T-cell (primary cell): ENCODE measurements at regions of chr9 and their contacts with region 1.

Region 1: DNA sequence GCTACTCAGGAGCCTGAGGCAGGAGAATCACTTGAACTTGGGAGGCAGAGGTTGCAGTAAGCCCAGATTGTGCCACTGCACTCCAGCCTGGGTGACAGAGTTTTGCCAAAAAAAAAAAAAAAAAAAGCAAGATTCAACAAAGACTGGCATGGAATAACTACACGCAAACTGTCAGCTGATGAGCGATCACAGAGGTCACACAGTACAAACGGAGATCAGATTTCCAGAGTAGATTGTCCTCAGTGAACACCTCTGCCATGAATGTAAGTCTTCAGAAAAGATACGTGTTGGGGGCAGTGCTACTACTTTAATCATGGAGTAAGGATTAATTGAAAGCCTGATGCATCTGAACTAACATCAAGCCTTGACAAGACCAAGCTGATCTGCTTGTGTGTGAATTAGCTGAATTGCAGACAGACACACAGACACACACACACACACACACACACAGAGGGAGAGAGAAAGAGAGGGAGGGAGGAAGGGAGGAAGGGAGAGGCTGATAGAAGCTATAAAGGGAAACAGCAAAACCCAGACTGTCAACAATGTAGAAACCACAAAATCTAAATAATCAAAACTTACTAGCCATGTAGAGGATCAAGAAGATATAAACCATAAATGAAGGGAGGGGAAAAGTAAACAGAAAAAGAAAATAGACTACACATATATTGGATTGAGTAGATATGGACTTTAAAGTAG is 222.9 kb upstream of the ZNF462 start:
- DNase-seq: no peak
- ATAC-seq: no peak
- H3K4me3 ChIP-seq: no peak overlapping the region
- H3K4me3 Mint-ChIP-seq: no peak overlapping the region
- H3K27ac ChIP-seq: no peak overlapping the region
- H3K27ac Mint-ChIP-seq: no peak overlapping the region
- H3K4me1 ChIP-seq: no peaks in the 10 kb centered on the region
- H3K4me1 Mint-ChIP-seq: no peaks in the 10 kb centered on the region
- H3K27me3 ChIP-seq: no peaks in the 10 kb centered on the region
- H3K27me3 Mint-ChIP-seq: no peaks in the 10 kb centered on the region

Region 2: DNA sequence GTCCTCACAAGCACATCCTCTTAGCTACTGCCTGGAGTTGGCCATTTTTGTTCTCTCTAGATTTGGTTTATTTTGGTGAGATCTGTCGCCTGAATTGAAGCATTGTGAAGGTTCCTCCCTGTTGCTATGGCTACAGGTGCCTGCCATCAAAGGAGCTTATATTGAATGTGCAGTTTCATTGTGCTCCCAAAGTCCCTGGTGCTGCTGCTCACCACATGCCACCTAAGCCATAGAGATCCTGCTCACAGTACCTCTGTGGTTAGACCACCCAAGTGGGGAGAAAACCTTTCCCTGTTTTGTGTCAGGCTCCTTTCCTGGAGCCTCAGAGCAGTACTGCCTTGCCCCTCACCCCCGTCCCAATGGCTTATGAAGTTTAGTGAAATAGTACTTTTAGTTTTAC is 562.3 kb before region 1 on chr9:
- CTCF ChIA-PET with region 1: no interaction called
- POLR2A ChIA-PET with region 1: interaction called in 1 of 2 experiments, 10 read pairs
- DNase-seq: no peak
- ATAC-seq: no peak
- H3K4me3 ChIP-seq: no peak overlapping the region
- H3K4me3 Mint-ChIP-seq: no peak overlapping the region
- H3K27ac ChIP-seq: no peak overlapping the region
- H3K27ac Mint-ChIP-seq: no peak overlapping the region
- H3K4me1 ChIP-seq: no peaks in the 10 kb centered on the region
- H3K4me1 Mint-ChIP-seq: no peaks in the 10 kb centered on the region
- H3K27me3 ChIP-seq: no peaks in the 10 kb centered on the region
- H3K27me3 Mint-ChIP-seq: peaks cover 0 to 7% of the 10 kb centered on the region in 2 donors

Region 3: DNA sequence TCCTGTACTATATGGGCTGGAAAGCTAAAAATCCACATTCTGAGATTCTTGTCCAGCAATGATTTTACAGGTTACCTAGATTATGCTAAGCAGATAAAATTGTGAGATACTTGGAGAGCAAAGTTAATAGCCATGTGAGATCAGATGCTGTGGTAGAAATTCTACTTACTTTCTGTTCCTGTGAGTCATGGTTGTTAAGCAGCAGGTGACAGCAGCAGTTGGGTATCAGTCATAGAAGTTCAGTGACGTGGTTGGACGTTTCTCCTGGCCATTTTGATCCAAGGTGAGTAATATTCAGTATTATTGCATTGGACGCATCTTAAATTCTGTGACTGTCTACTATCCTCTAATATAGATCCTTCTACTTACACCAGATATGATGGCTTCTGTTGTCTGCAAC is 421.2 kb before region 1 on chr9:
- CTCF ChIA-PET with region 1: no interaction called
- POLR2A ChIA-PET with region 1: no interaction called
- DNase-seq: no peak
- ATAC-seq: no peak
- H3K4me3 ChIP-seq: no peak overlapping the region
- H3K4me3 Mint-ChIP-seq: no peak overlapping the region
- H3K27ac ChIP-seq: no peak overlapping the region
- H3K27ac Mint-ChIP-seq: no peak overlapping the region
- H3K4me1 ChIP-seq: no peaks in the 10 kb centered on the region
- H3K4me1 Mint-ChIP-seq: no peaks in the 10 kb centered on the region
- H3K27me3 ChIP-seq: no peaks in the 10 kb centered on the region
- H3K27me3 Mint-ChIP-seq: no peaks in the 10 kb centered on the region

Region 4: DNA sequence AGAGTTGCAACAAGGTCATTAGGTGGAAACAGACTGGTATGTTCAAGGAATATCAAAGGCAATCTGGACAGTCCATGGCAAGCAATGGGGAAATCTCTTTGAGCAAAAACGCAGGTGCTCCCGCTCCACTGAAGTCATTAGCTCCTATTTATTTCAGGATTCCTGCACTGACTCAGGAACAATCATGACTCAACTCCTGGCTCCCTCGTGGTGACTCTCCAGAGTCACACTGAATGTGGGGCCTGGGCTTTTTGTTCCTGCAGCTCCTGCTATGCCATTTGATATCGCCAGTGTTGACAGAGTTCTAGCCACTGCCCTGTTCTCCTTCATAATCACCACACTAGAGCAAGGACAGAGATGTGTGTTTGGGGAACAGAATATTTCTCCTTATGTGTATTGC is 35.7 kb after region 1 on chr9:
- CTCF ChIA-PET with region 1: no interaction called
- POLR2A ChIA-PET with region 1: no interaction called
- DNase-seq: no peak
- ATAC-seq: no peak
- H3K4me3 ChIP-seq: no peak overlapping the region
- H3K4me3 Mint-ChIP-seq: no peak overlapping the region
- H3K27ac ChIP-seq: no peak overlapping the region
- H3K27ac Mint-ChIP-seq: no peak overlapping the region
- H3K4me1 ChIP-seq: no peaks in the 10 kb centered on the region
- H3K4me1 Mint-ChIP-seq: no peaks in the 10 kb centered on the region
- H3K27me3 ChIP-seq: no peaks in the 10 kb centered on the region
- H3K27me3 Mint-ChIP-seq: no peaks in the 10 kb centered on the region

Region 5: DNA sequence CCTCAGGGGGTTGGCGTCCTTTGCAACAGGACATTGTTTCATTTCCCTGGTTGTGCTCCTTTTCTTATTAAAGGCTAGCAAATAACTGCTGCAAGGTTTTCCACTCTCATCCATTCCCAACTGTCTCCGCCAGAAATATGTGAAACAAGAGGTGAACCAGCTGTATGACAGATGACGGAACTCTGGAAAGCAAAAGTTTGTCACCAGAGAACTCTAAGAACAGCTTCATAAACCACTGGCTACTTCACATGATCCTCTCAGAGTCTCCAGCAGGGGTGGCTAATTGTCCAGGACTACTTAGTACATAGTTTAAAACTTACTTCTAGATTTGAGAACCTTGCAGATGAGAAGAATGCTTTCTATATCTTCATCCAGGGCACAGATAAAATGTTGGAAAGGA is 447.2 kb after region 1 on chr9:
- CTCF ChIA-PET with region 1: no interaction called
- POLR2A ChIA-PET with region 1: no interaction called
- DNase-seq: no peak
- ATAC-seq: no peak
- H3K4me3 ChIP-seq: no peak overlapping the region
- H3K4me3 Mint-ChIP-seq: no peak overlapping the region
- H3K27ac ChIP-seq: no peak overlapping the region
- H3K27ac Mint-ChIP-seq: no peak overlapping the region
- H3K4me1 ChIP-seq: no peaks in the 10 kb centered on the region
- H3K4me1 Mint-ChIP-seq: no peaks in the 10 kb centered on the region
- H3K27me3 ChIP-seq: no peaks in the 10 kb centered on the region
- H3K27me3 Mint-ChIP-seq: peaks cover 11 to 18% of the 10 kb centered on the region in 2 donors

Region 6: DNA sequence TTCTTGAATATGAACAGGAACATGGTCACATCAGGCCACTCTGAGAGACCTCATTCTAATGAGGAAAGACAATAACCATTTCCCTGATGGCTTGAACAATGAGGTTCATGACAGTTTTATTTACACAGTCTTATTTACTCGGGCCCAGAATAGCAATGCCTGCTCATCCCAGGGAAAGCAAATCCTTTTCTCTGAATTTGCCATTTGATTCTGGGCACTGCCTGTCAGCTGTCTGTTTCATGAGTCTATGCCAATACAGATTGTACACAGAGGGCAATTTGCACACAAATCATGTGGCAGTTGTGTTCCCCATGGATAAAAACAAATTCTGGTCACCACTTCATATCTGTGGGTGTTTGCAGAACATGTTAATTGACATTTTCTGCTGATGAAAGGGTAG is 1723.3 kb after region 1 on chr9:
- CTCF ChIA-PET with region 1: no interaction called
- POLR2A ChIA-PET with region 1: no interaction called
- DNase-seq: no peak
- ATAC-seq: no peak
- H3K4me3 ChIP-seq: no peak overlapping the region
- H3K4me3 Mint-ChIP-seq: no peak overlapping the region
- H3K27ac ChIP-seq: no peak overlapping the region
- H3K27ac Mint-ChIP-seq: no peak overlapping the region
- H3K4me1 ChIP-seq: no peaks in the 10 kb centered on the region
- H3K4me1 Mint-ChIP-seq: no peaks in the 10 kb centered on the region
- H3K27me3 ChIP-seq: no peaks in the 10 kb centered on the region
- H3K27me3 Mint-ChIP-seq: no peaks in the 10 kb centered on the region